Vagina (tissue), 2 donors: ENCODE measurements at regions of chr14 and their contacts with region 1.

Region 1: DNA sequence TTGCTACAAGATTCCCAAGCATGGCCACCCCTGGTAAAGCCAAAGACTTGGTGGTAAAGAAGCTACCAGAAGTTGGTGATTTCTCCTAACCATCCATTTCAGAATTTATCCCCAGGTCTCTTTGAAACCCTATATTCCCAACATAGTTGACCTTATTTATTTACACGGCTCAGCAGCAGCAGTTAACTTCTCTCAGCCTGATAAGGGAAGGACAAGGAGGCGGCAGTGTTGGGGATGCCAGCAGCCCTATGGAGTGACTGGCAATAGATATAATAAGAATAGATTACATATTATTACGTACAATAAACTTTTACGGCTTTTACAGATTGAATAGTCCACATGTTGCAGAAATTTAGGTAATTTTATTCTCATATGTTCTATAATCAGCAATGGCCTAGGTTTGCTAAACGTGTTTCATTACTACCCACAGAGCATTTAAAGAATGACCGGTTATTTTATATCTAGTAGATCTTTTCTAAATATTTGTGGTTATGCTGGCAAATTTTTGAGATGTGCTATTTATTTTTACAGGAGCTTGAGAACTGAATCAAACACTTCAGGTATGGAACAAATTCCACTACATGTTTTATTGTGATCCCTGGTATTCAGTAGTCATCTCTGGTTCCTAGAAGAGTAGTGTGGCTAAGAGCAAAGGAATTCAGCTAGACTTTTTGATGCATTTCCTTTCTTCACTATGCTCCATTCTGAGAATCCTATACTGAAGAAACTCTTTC is 19.8 kb upstream of the PALS1 start:
- DNase-seq: no peak
- H3K4me3 ChIP-seq: no peak overlapping the region
- H3K27ac ChIP-seq: no peak overlapping the region
- H3K4me1 ChIP-seq: no peaks in the 10 kb centered on the region
- H3K27me3 ChIP-seq: no peaks in the 10 kb centered on the region
- CTCF ChIP-seq: no peak
- POLR2A ChIP-seq: no peak

Region 2: GRCh38 chr14:67172520-67172919 is 48.9 kb before region 1 on chr14:
- intact Hi-C with region 1: loop called (anchors 1 kb)
- DNase-seq: no peak
- H3K4me3 ChIP-seq: no peak overlapping the region
- H3K27ac ChIP-seq: no peak overlapping the region
- H3K4me1 ChIP-seq: no peaks in the 10 kb centered on the region
- H3K27me3 ChIP-seq: no peaks in the 10 kb centered on the region
- CTCF ChIP-seq: no peak
- POLR2A ChIP-seq: no peak

Region 3: GRCh38 chr14:67285876-67286452 is 64.5 kb after region 1 on chr14:
- intact Hi-C with region 1: no loop called
- DNase-seq: no peak
- H3K4me3 ChIP-seq: no peak overlapping the region
- H3K27ac ChIP-seq: no peak overlapping the region
- H3K4me1 ChIP-seq: no peaks in the 10 kb centered on the region
- H3K27me3 ChIP-seq: no peaks in the 10 kb centered on the region
- CTCF ChIP-seq: peak in 2 of 3 experiments; percentile 35 to 60
- POLR2A ChIP-seq: no peak

Region 4: DNA sequence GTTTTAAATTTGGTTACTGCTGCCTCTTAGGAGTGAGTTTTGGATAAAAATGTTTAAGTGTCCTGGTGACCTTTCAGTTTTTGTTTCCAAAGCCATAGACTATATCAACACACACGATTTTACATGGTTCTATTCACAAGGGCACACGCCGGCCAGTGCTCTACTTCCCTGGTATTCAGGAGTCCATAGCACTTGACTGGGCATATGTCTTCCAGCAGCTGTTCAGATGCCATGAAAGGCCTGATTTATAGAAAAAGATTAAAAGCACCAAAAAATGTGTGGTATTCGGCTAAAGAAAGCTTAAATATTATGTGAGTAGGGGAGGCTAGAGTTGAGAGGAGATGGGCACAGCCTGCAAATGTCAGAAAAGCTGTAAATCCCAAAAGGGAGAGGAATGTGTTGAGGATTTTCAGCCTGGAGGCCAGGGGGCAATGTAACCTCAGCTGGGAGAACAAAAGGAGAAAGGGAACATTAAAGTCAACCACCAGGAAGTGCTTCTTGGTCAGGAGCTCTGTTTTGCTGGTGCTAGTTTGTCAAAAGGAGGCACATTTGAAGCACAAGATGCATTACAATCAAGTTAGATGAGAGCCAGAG is 1076.6 kb after region 1 on chr14:
- intact Hi-C with region 1: no loop called
- DNase-seq: no peak
- H3K4me3 ChIP-seq: no peak overlapping the region
- H3K27ac ChIP-seq: peak overlapping the region; percentile 70
- H3K4me1 ChIP-seq: peaks cover 48% of the 10 kb centered on the region
- H3K27me3 ChIP-seq: no peaks in the 10 kb centered on the region
- CTCF ChIP-seq: no peak
- POLR2A ChIP-seq: no peak